ENCODE measurements at regions of chr17 and their contacts with region 1.

Region 1: GRCh38 chr17:34420254-34420766 is 57.3 kb upstream of the CCL1 start:
- DNase-seq: peak; percentile 56
- ATAC-seq: peak; percentile 82
- H3K4me3 ChIP-seq: no peak overlapping the region
- H3K27ac ChIP-seq: no peak overlapping the region
- H3K4me1 ChIP-seq: no peaks in the 10 kb centered on the region
- H3K27me3 ChIP-seq: peaks cover 3% of the 10 kb centered on the region; the same call in 1 of the 2 replicates
- CTCF ChIP-seq: peak; percentile 91

Region 2: DNA sequence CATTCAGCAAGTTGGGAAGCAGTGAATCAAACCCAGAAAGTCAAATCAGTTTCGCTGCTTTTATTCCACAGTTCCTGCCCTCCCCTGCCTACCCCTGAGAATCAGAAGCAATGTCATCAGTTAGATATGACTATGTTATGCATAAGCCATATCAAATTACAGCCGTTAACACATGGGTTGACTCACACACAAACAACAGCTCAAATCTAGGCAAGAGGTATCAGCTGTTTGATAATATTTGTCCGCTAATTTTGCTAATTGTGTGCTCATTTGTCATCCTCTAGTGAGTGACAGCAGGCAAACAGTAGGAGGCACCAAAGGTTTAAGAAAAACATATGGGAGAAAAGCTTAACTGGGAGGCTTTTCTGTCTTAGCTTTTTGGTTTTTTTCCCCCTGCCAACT is 492.6 kb before region 1 on chr17:
- CTCF ChIA-PET with region 1: no interaction called
- POLR2A ChIA-PET with region 1: no interaction called
- in situ Hi-C with region 1: no loop called
- intact Hi-C with region 1: no loop called
- DNase-seq: no peak
- ATAC-seq: no peak; the same call in 1 of the 2 replicates
- H3K4me3 ChIP-seq: no peak overlapping the region
- H3K27ac ChIP-seq: no peak overlapping the region
- H3K4me1 ChIP-seq: no peaks in the 10 kb centered on the region
- H3K27me3 ChIP-seq: peaks cover 4% of the 10 kb centered on the region; the same call in 1 of the 2 replicates
- CTCF ChIP-seq: no peak

Region 3: DNA sequence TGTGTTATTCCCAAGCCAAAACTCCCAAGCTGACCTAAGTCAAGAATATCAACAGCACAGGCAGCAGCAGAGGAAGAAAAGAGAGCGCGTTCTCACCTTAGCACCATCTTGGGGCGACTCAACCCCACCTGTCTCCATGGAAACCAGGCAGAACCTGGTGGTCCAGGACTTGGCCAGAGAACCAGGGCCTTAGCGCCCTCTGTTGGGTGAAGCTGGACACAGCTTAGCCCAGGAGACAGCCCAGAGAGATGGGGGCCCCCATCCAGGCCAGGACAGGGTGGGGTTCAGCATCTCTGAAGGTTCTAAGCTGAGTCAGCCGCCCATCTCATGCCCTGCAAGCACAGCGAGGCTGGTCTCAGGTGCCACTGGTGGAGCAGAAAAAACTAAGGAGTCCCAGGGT is 99.0 kb after region 1 on chr17:
- CTCF ChIA-PET with region 1: no interaction called
- POLR2A ChIA-PET with region 1: no interaction called
- in situ Hi-C with region 1: no loop called
- intact Hi-C with region 1: loop called (anchors 5 kb)
- DNase-seq: no peak
- ATAC-seq: peak; percentile 62; the same call in 1 of the 2 replicates
- H3K4me3 ChIP-seq: no peak overlapping the region
- H3K27ac ChIP-seq: no peak overlapping the region
- H3K4me1 ChIP-seq: no peaks in the 10 kb centered on the region
- H3K27me3 ChIP-seq: peaks cover 6% of the 10 kb centered on the region; the same call in 1 of the 2 replicates
- CTCF ChIP-seq: peak; percentile 72

Region 4: DNA sequence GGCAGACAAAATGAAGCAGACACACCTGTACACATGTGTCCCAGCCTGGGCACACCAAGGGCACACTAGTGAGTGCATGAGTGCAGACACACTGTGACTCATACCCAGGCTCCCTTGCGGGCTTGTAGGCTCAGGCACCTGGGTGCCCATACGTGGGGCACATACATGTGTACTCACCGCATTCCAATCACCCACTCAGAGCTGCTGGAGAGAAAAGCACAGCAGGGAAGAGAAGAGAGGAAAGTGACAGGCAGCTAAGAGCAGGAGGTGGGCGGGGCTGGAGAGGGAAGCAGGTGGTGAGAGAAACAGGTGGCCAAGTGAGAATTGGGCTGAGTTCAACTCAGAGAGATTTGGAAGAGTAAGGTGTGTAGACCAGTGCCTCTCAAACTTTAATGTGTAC is 213.0 kb after region 1 on chr17:
- CTCF ChIA-PET with region 1: no interaction called
- POLR2A ChIA-PET with region 1: no interaction called
- in situ Hi-C with region 1: no loop called
- intact Hi-C with region 1: no loop called
- DNase-seq: no peak
- ATAC-seq: no peak
- H3K4me3 ChIP-seq: no peak overlapping the region
- H3K27ac ChIP-seq: no peak overlapping the region
- H3K4me1 ChIP-seq: no peaks in the 10 kb centered on the region
- H3K27me3 ChIP-seq: peaks cover 5% of the 10 kb centered on the region; the same call in 1 of the 2 replicates
- CTCF ChIP-seq: no peak

Region 5: GRCh38 chr17:35119368-35120165 is 699.3 kb after region 1 on chr17 and contains the start of gene RAD51D:
- CTCF ChIA-PET with region 1: no interaction called
- POLR2A ChIA-PET with region 1: no interaction called
- in situ Hi-C with region 1: no loop called
- intact Hi-C with region 1: loop called (anchors 5 kb)
- DNase-seq: no peak
- ATAC-seq: peak; percentile 97
- H3K4me3 ChIP-seq: peak within 1 kb of the TSS; percentile 68 to 71
- H3K27ac ChIP-seq: peak within 1 kb of the TSS; percentile 81
- H3K4me1 ChIP-seq: peaks cover 11% of the 10 kb centered on the region; the same call in 1 of the 2 replicates
- H3K27me3 ChIP-seq: no peaks in the 10 kb centered on the region
- CTCF ChIP-seq: peak; percentile 98
- total RNA-seq, gene RAD51D: 25.9 TPM

Measured in Panc1 (cell line).